Calu3 (cell line): ENCODE measurements at regions of chr2 and their contacts with region 1.

Region 1: DNA sequence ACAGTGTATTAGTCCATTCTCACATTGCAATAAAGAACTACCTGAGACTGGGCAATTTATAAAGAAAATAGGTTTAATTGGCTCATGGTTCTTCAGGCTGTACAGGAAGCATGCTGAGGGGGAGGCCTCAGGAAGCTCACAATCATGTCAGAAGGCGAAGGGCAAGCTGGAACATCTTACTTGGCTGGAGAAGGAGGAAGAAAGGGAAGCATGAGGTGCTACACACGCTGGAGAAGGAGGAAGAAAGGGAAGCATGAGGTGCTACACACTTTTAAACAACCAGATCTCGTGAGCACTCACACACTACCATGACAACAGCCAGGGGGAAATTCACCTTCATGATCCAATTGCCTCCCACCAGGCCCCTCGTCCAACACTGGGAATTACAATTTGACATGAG is 95.3 kb upstream of the FAM110C start:
- DNase-seq: no peak
- H3K4me3 Mint-ChIP-seq: no peak overlapping the region
- H3K27ac Mint-ChIP-seq: no peak overlapping the region
- H3K4me1 Mint-ChIP-seq: no peaks in the 10 kb centered on the region
- H3K27me3 Mint-ChIP-seq: no peaks in the 10 kb centered on the region
- CTCF ChIP-seq: no peak

Region 2: GRCh38 chr2:18402-19271 is 123.0 kb before region 1 on chr2:
- CTCF ChIA-PET with region 1: interaction called, 40 read pairs
- intact Hi-C with region 1: no loop called
- DNase-seq: peak; percentile 18
- H3K4me3 Mint-ChIP-seq: no peak overlapping the region
- H3K27ac Mint-ChIP-seq: no peak overlapping the region
- H3K4me1 Mint-ChIP-seq: peaks cover 37% of the 10 kb centered on the region
- H3K27me3 Mint-ChIP-seq: no peaks in the 10 kb centered on the region
- CTCF ChIP-seq: peak; percentile 57

Region 3: DNA sequence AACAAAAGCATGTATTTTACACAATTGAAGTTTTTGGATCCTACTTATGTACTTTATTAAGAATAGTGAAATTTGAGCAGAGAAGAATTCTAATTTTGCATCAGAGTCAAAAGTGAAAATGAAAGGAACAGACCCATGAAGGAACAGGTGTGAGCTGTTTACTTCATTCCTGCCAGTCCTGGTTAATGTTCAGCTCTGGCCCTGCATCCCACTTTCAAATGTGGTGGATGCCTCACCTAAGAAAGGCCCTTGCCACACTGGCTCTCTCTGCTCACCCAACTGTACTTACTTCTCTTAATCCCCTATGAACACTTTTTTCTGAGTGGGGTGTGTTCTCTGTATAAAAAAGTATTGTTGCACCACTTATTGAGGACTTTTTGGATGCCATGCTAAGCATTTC is 117.5 kb before region 1 on chr2:
- CTCF ChIA-PET with region 1: interaction called, 40 read pairs
- intact Hi-C with region 1: no loop called
- DNase-seq: peak; percentile 35
- H3K4me3 Mint-ChIP-seq: no peak overlapping the region
- H3K27ac Mint-ChIP-seq: no peak overlapping the region
- H3K4me1 Mint-ChIP-seq: peaks cover 26% of the 10 kb centered on the region
- H3K27me3 Mint-ChIP-seq: no peaks in the 10 kb centered on the region
- CTCF ChIP-seq: no peak

Region 4: GRCh38 chr2:46471-47345 is 94.9 kb before region 1 on chr2 and contains the start of gene FAM110C:
- CTCF ChIA-PET with region 1: interaction called, 8 read pairs
- intact Hi-C with region 1: loop called (anchors 1 kb)
- DNase-seq: peak; percentile 95
- H3K4me3 Mint-ChIP-seq: peak within 1 kb of the TSS; percentile 76
- H3K27ac Mint-ChIP-seq: peak within 1 kb of the TSS; percentile 95
- H3K4me1 Mint-ChIP-seq: peaks cover 43% of the 10 kb centered on the region
- H3K27me3 Mint-ChIP-seq: no peaks in the 10 kb centered on the region
- CTCF ChIP-seq: no peak
- total RNA-seq, gene FAM110C: 17.9 and 20.6 TPM in 2 replicates